PC-3 (cell line): ENCODE measurements at regions of chr2 and their contacts with region 1.

Region 1: GRCh38 chr2:63861220-63861822 is 19.6 kb downstream of the UGP2 start:
- DNase-seq: peak; percentile 64
- ATAC-seq: peak; percentile 28; the same call in 1 of the 2 replicates
- H3K4me3 ChIP-seq: no peak overlapping the region
- H3K27ac ChIP-seq: no peak overlapping the region
- H3K4me1 ChIP-seq: peaks cover 30% of the 10 kb centered on the region
- H3K27me3 ChIP-seq: no peaks in the 10 kb centered on the region
- CTCF ChIP-seq: peak; percentile 72

Region 2: GRCh38 chr2:63588385-63589147 is 272.8 kb before region 1 on chr2 and contains the starts of genes MDH1 and WDPCP:
- CTCF ChIA-PET with region 1: interaction called, 5 read pairs
- POLR2A ChIA-PET with region 1: no interaction called
- intact Hi-C with region 1: loop called (anchors 5 kb)
- DNase-seq: peak; percentile 99
- ATAC-seq: peak; percentile 87
- H3K4me3 ChIP-seq: peak within 1 kb of the TSS; percentile 82
- H3K27ac ChIP-seq: peak within 1 kb of the TSS; percentile 73
- H3K4me1 ChIP-seq: peaks cover 29% of the 10 kb centered on the region
- H3K27me3 ChIP-seq: no peaks in the 10 kb centered on the region
- CTCF ChIP-seq: no peak
- total RNA-seq, gene MDH1: 249 and 304 TPM in 2 replicates
- total RNA-seq, gene WDPCP: 4.0 and 6.3 TPM in 2 replicates

Region 3: DNA sequence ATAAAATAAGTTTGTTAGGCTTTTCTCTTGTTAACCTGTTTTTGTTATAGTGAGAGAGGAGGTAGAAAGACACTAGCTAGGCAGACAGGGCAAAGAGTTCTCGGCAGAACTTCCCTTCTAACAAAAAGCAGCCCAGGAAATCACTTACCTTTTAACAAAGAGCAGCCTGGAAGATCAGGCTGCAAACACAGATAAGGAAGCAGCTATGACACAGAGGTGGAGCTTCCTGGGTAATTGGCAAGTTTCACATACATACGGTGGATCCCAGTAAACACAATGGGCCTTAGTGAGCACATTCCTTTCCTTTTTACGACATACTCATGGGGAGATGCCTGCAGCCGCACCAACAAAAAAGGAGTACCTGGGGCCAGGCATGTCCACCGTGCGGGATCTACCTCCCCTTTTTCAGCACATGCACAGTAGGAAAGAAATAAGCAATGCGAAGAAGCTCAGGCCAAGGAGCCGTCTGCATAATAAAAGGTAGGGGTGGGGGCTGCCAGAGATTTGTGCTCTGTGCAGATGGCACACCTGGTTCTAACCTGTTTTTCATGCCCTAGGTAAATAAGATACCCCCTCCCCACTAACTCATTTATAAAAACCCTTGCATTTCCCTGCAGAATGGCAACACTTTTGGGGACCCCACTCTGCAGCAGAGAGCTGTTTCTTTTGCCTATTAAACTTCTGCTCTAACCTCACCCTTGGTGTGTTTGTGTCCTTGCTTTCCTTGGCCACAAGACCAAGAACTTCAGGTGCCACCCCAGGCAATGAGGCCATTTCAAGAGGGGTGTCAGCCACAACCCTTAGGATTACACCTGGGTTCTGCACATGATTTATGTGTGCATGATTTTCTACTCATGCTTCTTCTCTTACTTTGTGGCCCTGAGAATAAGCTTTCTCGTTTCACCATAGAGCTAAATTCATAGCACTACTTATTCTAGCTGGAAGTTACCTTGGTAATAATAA is 246.1 kb before region 1 on chr2:
- CTCF ChIA-PET with region 1: no interaction called
- POLR2A ChIA-PET with region 1: no interaction called
- intact Hi-C with region 1: loop called (anchors 10 kb)
- DNase-seq: peak; percentile 89
- ATAC-seq: peak; percentile 90
- H3K4me3 ChIP-seq: peak overlapping the region; percentile 45
- H3K27ac ChIP-seq: peak overlapping the region; percentile 75
- H3K4me1 ChIP-seq: peaks cover 33% of the 10 kb centered on the region
- H3K27me3 ChIP-seq: no peaks in the 10 kb centered on the region
- CTCF ChIP-seq: no peak

Region 4: GRCh38 chr2:63692002-63692606 is 169.2 kb before region 1 on chr2:
- CTCF ChIA-PET with region 1: interaction called, 3 read pairs
- POLR2A ChIA-PET with region 1: no interaction called
- intact Hi-C with region 1: loop called (anchors 1 kb)
- DNase-seq: peak; percentile 74
- ATAC-seq: peak; percentile 45
- H3K4me3 ChIP-seq: no peak overlapping the region
- H3K27ac ChIP-seq: no peak overlapping the region
- H3K4me1 ChIP-seq: peaks cover 11% of the 10 kb centered on the region
- H3K27me3 ChIP-seq: no peaks in the 10 kb centered on the region
- CTCF ChIP-seq: peak; percentile 72

Region 5: DNA sequence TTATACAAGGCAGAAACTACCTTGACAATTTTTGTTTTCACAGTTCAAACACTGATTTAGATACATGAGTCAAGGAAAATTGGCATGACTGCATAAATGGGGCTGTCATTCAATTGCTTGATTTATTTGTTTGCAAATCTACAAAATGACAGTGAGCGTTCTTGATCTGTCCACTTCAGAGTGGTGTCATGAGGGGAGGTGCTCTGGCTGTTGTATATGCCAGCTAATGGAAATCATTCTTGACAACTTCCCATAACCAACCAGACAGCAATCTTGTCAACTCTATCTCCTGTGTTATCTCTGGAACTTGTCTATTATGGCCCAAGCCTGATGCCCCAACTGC is 140.3 kb before region 1 on chr2:
- CTCF ChIA-PET with region 1: no interaction called
- POLR2A ChIA-PET with region 1: no interaction called
- intact Hi-C with region 1: no loop called
- DNase-seq: peak; percentile 63
- ATAC-seq: peak; percentile 86
- H3K4me3 ChIP-seq: no peak overlapping the region
- H3K27ac ChIP-seq: no peak overlapping the region
- H3K4me1 ChIP-seq: peaks cover 8% of the 10 kb centered on the region
- H3K27me3 ChIP-seq: no peaks in the 10 kb centered on the region
- CTCF ChIP-seq: no peak

Region 6: DNA sequence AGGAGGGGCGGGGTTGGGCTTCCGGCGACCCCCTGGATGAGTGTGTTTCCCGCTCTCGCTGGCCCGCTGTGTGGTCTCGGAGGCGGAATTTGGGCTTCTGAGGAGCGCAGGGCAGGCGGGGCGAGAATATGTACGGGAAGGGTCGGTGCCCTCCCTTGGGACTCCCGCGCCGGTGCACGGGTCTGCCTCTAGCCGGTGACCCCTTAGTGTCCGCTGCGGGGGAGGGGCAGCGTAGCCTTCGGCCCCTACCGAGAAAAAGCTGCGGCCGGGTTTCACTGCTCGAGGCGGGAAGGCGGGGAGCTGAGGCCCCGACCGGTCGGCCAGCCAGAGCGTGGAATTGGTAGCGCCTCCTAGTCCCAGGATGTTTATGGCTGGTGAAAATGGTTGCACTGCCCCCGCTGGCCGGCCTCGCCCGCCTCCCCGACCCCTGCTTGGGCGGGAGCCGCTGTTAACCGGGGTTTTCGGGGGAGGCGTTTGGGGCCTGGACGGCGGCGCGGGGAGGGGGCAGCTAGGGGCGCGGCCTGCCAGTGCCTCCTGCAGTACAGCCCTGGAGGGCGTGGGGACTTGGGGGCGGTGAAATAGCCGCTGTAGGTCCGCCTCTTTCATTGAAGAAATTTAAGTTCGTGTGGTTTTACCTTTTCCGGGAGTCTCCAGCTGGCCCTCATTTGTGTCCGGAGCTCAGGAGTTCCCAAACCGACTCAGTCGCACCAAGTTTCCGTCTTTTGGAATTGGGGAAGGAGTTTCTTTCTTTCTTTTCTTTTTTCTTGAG is 19.9 kb before region 1 on chr2 and contains the start of gene UGP2:
- CTCF ChIA-PET with region 1: no interaction called
- POLR2A ChIA-PET with region 1: interaction called, 5 read pairs
- intact Hi-C with region 1: loop called (anchors 1 kb)
- DNase-seq: peak; percentile 91
- ATAC-seq: peak; percentile 76
- H3K4me3 ChIP-seq: peak within 1 kb of the TSS; percentile 86
- H3K27ac ChIP-seq: peak within 1 kb of the TSS; percentile 81
- H3K4me1 ChIP-seq: peaks cover 28% of the 10 kb centered on the region
- H3K27me3 ChIP-seq: no peaks in the 10 kb centered on the region
- CTCF ChIP-seq: peak; percentile 42
- total RNA-seq, gene UGP2: 48.4 and 55.8 TPM in 2 replicates